CD8-positive, alpha-beta T cell (primary cell): ENCODE measurements at regions of chr22 and their contacts with region 1.

Region 1: DNA sequence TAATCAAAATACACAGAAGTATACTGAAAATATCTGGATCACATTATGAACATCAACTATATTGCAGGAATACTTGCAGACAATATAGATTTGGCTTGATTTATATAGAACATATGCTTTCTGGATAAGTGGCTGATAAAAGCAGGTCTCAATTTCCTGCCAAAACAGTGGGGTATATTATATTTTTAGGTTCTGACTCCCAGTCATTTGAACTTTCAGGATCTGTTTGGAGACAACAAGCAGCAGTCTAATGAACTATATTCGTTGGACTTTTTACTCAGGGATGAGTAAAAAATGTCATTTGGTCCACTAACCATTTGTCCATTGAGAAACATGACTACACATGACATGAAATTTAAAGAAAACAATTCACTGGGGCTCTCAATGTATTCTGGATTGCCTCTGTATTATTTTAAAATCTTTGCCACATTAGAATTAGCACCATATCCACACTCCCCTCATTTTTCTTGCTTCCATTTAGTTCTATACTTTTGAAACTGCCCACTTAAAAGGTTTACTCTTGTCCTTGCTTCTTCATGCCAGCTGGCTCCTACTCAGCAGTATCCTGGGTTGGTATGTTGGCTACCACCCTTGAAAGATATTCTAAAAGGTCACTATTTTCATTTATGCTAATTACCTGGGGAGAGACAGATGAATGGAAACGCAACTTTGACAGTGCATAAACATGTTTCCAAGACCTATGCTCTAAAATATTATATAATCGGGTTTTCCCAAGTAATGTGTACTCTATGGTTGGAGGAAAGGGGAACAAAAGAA is 153.0 kb downstream of the APOL5 start:
- DNase-seq: no peak
- ATAC-seq: no peak
- H3K4me3 ChIP-seq: no peak overlapping the region
- H3K4me3 Mint-ChIP-seq: no peak overlapping the region
- H3K27ac ChIP-seq: no peak overlapping the region
- H3K27ac Mint-ChIP-seq: no peak overlapping the region
- H3K4me1 ChIP-seq: no peaks in the 10 kb centered on the region
- H3K4me1 Mint-ChIP-seq: no peaks in the 10 kb centered on the region
- H3K27me3 ChIP-seq: no peaks in the 10 kb centered on the region
- H3K27me3 Mint-ChIP-seq: peaks cover 6% of the 10 kb centered on the region
- CTCF ChIP-seq: no peak

Region 2: GRCh38 chr22:35900483-35901168 is 29.9 kb after region 1 on chr22:
- CTCF ChIA-PET with region 1: no interaction called
- POLR2A ChIA-PET with region 1: no interaction called
- intact Hi-C with region 1: no loop called
- DNase-seq: peak in 2 of 9 experiments; percentile 22 to 26
- ATAC-seq: peak; percentile 69
- H3K4me3 ChIP-seq: no peak overlapping the region
- H3K4me3 Mint-ChIP-seq: no peak overlapping the region
- H3K27ac ChIP-seq: no peak overlapping the region
- H3K27ac Mint-ChIP-seq: peak overlapping the region; percentile 21
- H3K4me1 ChIP-seq: peaks cover 13% of the 10 kb centered on the region
- H3K4me1 Mint-ChIP-seq: peaks cover 15% of the 10 kb centered on the region
- H3K27me3 ChIP-seq: peaks cover 0 to 3% of the 10 kb centered on the region in 2 experiments
- H3K27me3 Mint-ChIP-seq: peaks cover 6% of the 10 kb centered on the region
- CTCF ChIP-seq: no peak

Region 3: GRCh38 chr22:36873680-36874537 is 1003.2 kb after region 1 on chr22:
- CTCF ChIA-PET with region 1: no interaction called
- POLR2A ChIA-PET with region 1: no interaction called
- intact Hi-C with region 1: loop called in 1 of 2 experiments (anchors 5 kb)
- DNase-seq: peak in 2 of 9 experiments; percentile 20 to 36
- ATAC-seq: no peak
- H3K4me3 ChIP-seq: no peak overlapping the region
- H3K4me3 Mint-ChIP-seq: no peak overlapping the region
- H3K27ac ChIP-seq: peak overlapping the region in 1 of 2 experiments; percentile 46
- H3K27ac Mint-ChIP-seq: no peak overlapping the region
- H3K4me1 ChIP-seq: no peaks in the 10 kb centered on the region
- H3K4me1 Mint-ChIP-seq: no peaks in the 10 kb centered on the region
- H3K27me3 ChIP-seq: no peaks in the 10 kb centered on the region
- H3K27me3 Mint-ChIP-seq: peaks cover 8% of the 10 kb centered on the region
- CTCF ChIP-seq: no peak